ENCODE measurements at regions of chr4 and their contacts with region 1.

Region 1: DNA sequence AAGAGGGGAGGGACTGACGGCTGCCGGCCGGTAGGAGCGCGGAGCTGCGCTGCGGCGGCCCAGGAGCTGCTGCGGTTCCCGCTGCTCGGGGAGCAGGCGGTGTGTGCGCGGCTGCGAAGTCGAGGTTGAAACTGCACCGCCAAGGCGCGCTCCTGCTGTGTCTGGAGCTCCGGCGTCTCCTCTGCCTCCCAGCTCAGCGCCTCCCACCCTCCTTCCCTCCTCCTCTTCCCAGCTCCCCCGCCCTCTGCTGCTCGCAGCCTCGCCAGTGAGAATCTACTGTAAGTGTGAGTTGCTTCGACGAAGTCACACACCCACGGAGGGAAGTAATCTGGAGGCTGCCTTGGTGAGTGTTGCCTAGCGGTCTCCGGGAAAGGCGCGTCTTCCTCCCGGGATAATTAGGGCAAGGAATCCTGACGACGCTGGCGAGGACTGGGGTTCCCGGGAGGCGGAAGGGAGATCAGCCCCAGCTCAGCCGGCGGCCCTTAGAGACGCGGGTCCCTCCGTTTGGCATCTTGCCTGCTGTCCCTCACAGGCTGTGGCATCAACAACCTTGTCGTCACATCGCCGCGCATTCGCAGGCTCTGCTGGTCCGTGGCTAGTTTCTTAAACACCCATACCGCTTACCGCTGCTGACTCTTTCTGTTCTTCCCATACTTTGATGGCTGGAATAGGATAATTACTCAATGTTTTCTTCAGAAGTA is at the start of gene EPHA5:
- DNase-seq: peak; percentile 83
- H3K4me3 ChIP-seq: peak within 1 kb of the TSS; percentile 45 to 89 (median 89)
- H3K27ac ChIP-seq: peak within 1 kb of the TSS; percentile 43
- H3K4me1 ChIP-seq: peaks cover 18% of the 10 kb centered on the region
- H3K27me3 ChIP-seq: peaks cover 11 to 17% of the 10 kb centered on the region in 2 experiments
- CTCF ChIP-seq: peak in 1 of 2 donors; percentile 41
- POLR2A ChIP-seq: peak; percentile 66
- total RNA-seq, gene EPHA5: 0.31 and 1.3 TPM in 2 replicates

Region 2: GRCh38 chr4:65383589-65384305 is 286.7 kb before region 1 on chr4:
- CTCF ChIA-PET with region 1: no interaction called
- POLR2A ChIA-PET with region 1: no interaction called
- dilution Hi-C with region 1: no loop called
- intact Hi-C with region 1: no loop called
- DNase-seq: peak; percentile 49
- H3K4me3 ChIP-seq: no peak overlapping the region
- H3K27ac ChIP-seq: peak overlapping the region; percentile 81
- H3K4me1 ChIP-seq: peaks cover 15% of the 10 kb centered on the region
- H3K27me3 ChIP-seq: no peaks in the 10 kb centered on the region
- CTCF ChIP-seq: no peak
- POLR2A ChIP-seq: no peak

Region 3: GRCh38 chr4:65508169-65508568 is 162.3 kb before region 1 on chr4:
- CTCF ChIA-PET with region 1: no interaction called
- POLR2A ChIA-PET with region 1: no interaction called
- dilution Hi-C with region 1: no loop called
- intact Hi-C with region 1: loop called (anchors 1 kb)
- DNase-seq: peak; percentile 90
- H3K4me3 ChIP-seq: no peak overlapping the region
- H3K27ac ChIP-seq: peak overlapping the region; percentile 82
- H3K4me1 ChIP-seq: peaks cover 19% of the 10 kb centered on the region
- H3K27me3 ChIP-seq: no peaks in the 10 kb centered on the region
- CTCF ChIP-seq: no peak
- POLR2A ChIP-seq: no peak

Region 4: GRCh38 chr4:65651031-65651430 is 19.4 kb before region 1 on chr4:
- CTCF ChIA-PET with region 1: interaction called, 6 read pairs
- POLR2A ChIA-PET with region 1: no interaction called
- dilution Hi-C with region 1: no loop called
- intact Hi-C with region 1: loop called (anchors 2 kb)
- DNase-seq: no peak
- H3K4me3 ChIP-seq: no peak overlapping the region
- H3K27ac ChIP-seq: no peak overlapping the region
- H3K4me1 ChIP-seq: peaks cover 26% of the 10 kb centered on the region
- H3K27me3 ChIP-seq: no peaks in the 10 kb centered on the region
- CTCF ChIP-seq: no peak
- POLR2A ChIP-seq: no peak

Region 5: GRCh38 chr4:65791807-65792308 is 121.4 kb after region 1 on chr4:
- CTCF ChIA-PET with region 1: no interaction called
- POLR2A ChIA-PET with region 1: no interaction called
- dilution Hi-C with region 1: no loop called
- intact Hi-C with region 1: loop called (anchors 5 kb)
- DNase-seq: peak; percentile 46
- H3K4me3 ChIP-seq: peak overlapping the region in 1 of 3 experiments; percentile 17
- H3K27ac ChIP-seq: peak overlapping the region; percentile 41
- H3K4me1 ChIP-seq: peaks cover 8% of the 10 kb centered on the region
- H3K27me3 ChIP-seq: no peaks in the 10 kb centered on the region
- CTCF ChIP-seq: no peak
- POLR2A ChIP-seq: no peak

Measured in endothelial cell of umbilical vein (primary cell).